ENCODE measurements at regions of chr5 and their contacts with region 1.

Region 1: DNA sequence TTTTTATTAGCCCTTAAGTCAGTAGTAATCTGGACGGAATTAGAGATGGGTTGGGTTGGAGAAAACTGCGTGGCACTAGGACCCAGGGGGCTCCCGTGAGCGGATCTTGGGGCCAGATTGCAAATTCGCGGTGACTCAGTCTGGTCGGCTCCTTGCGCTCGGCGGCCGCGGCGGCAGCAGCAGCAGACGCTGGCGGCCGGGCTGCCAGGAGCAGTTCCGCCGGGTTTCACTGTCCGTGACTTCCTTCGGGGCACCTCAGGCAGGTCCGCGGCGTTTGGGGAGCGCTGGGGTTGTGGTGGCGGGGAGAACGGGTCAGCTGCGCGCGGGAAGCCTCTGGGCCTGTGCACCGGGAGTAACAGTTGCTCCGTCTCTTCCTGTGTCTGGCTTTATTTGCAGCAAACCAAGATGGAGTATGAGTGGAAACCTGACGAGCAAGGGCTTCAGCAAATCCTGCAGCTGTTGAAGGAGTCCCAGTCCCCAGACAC is 31.6 kb downstream of the TNPO1 start:
- DNase-seq: peak; percentile 93
- H3K4me3 Mint-ChIP-seq: peak overlapping the region; percentile 98
- H3K27ac Mint-ChIP-seq: peak overlapping the region; percentile 91
- H3K4me1 Mint-ChIP-seq: peaks cover 43% of the 10 kb centered on the region
- H3K27me3 Mint-ChIP-seq: no peaks in the 10 kb centered on the region
- CTCF ChIP-seq: no peak

Region 2: GRCh38 chr5:72307968-72308852 is 539.8 kb before region 1 on chr5:
- CTCF ChIA-PET with region 1: no interaction called
- POLR2A ChIA-PET with region 1: interaction called, 10 read pairs
- intact Hi-C with region 1: no loop called
- DNase-seq: peak; percentile 98
- H3K4me3 Mint-ChIP-seq: peak overlapping the region; percentile 87
- H3K27ac Mint-ChIP-seq: peak overlapping the region; percentile 95
- H3K4me1 Mint-ChIP-seq: peaks cover 9% of the 10 kb centered on the region
- H3K27me3 Mint-ChIP-seq: no peaks in the 10 kb centered on the region
- CTCF ChIP-seq: peak; percentile 79

Region 3: DNA sequence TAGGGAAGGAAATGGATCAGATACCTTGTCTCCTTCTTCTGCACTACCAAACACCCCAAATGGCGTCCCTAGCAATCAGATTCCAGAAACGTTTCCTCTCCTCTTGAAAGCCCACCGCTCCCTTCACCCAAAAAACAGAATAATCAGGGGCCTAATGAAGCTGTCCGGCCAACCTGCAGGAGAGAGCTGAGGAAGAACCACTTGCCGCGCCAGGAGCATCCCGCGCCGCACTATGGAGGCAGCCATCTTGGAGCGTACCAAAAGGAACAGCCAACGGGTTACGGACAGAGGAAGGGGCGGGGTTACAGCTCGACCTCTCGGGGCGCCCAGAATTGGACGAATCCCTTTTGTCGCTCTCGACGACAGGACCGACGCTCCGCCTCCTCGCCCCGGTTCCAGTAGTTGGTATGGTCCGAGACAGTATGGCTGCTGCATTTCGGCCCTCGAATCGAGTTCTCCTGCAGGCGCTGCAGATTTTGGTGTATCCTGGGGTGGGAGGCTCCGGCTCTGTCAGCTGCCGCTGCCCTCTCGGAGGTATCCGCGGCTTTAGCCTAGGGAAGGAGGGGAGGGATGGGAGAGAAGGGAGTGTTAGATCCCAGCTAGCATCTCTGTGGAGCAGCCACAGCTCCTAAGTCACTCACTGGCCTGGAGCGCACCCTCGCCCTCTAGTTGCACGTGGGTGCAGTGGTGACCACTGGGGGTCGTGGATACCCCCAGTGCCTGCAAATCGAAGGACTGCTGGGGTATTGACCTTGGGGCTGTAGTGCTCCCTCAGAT is 527.9 kb before region 1 on chr5 and contains the starts of genes MRPS27 and PTCD2:
- CTCF ChIA-PET with region 1: no interaction called
- POLR2A ChIA-PET with region 1: interaction called, 11 read pairs
- intact Hi-C with region 1: no loop called
- DNase-seq: peak; percentile 98
- H3K4me3 Mint-ChIP-seq: peak within 1 kb of the TSS; percentile 96
- H3K27ac Mint-ChIP-seq: peak within 1 kb of the TSS; percentile 87
- H3K4me1 Mint-ChIP-seq: peaks cover 19% of the 10 kb centered on the region
- H3K27me3 Mint-ChIP-seq: no peaks in the 10 kb centered on the region
- CTCF ChIP-seq: no peak
- total RNA-seq, gene MRPS27: 60.8 and 68.5 TPM in 2 replicates
- total RNA-seq, gene PTCD2: 20.3 and 20.6 TPM in 2 replicates

Region 4: DNA sequence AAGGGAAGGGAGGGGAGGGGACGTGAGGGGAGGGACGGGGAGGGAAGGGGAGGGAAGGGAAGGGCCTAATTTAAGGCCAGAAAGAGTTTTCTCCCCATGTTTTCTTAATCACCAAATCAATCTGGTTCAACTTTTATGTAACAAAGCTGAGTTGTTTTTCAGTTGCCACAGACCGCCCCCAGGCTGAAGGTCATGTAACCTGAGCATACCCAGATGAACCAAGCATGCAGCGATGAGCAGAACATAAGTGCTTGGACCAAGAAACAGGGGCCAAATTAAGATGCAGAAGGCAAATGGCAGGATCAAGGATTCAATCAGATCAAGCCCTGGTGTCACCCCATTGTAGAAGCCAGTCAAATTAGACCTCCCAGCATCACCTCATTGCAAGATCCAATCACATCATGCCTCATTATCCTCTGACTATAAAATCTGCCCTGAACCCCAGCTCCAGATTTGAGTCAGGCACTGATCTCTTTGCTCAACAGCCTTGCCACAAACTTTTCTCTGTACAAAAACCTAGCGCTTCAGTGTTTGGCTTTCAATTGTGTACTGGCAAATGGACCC is 145.1 kb before region 1 on chr5:
- CTCF ChIA-PET with region 1: no interaction called
- POLR2A ChIA-PET with region 1: no interaction called
- intact Hi-C with region 1: no loop called
- DNase-seq: peak; percentile 12
- H3K4me3 Mint-ChIP-seq: no peak overlapping the region
- H3K27ac Mint-ChIP-seq: no peak overlapping the region
- H3K4me1 Mint-ChIP-seq: no peaks in the 10 kb centered on the region
- H3K27me3 Mint-ChIP-seq: no peaks in the 10 kb centered on the region
- CTCF ChIP-seq: no peak

Region 5: GRCh38 chr5:72837524-72838096 is 10.4 kb before region 1 on chr5:
- CTCF ChIA-PET with region 1: interaction called, 3 read pairs
- POLR2A ChIA-PET with region 1: interaction called, 10 read pairs
- intact Hi-C with region 1: no loop called
- DNase-seq: no peak
- H3K4me3 Mint-ChIP-seq: no peak overlapping the region
- H3K27ac Mint-ChIP-seq: no peak overlapping the region
- H3K4me1 Mint-ChIP-seq: peaks cover 43% of the 10 kb centered on the region
- H3K27me3 Mint-ChIP-seq: no peaks in the 10 kb centered on the region
- CTCF ChIP-seq: no peak

Region 6: DNA sequence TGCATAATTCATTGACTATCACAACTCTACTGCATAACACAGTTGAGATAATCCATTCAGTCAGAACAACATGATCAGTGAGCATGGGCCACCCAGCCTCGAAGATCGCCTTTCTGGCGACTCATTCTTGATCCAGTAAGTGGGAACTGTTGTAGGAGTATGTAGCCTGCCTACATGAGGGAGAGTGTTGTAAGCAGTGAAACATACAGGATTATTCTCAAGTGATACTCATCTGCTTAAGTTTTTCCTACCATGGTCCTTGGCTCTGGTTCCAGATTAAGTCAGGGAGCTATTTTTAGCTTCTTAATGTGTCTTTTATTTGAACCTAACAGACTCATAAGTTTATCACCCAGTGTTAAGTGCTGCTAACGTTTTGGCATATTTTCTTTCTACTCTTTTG is 12.5 kb after region 1 on chr5:
- CTCF ChIA-PET with region 1: interaction called, 7 read pairs
- POLR2A ChIA-PET with region 1: interaction called, 19 read pairs
- intact Hi-C with region 1: no loop called
- DNase-seq: no peak
- H3K4me3 Mint-ChIP-seq: no peak overlapping the region
- H3K27ac Mint-ChIP-seq: no peak overlapping the region
- H3K4me1 Mint-ChIP-seq: peaks cover 5% of the 10 kb centered on the region
- H3K27me3 Mint-ChIP-seq: no peaks in the 10 kb centered on the region
- CTCF ChIP-seq: no peak

Region 7: DNA sequence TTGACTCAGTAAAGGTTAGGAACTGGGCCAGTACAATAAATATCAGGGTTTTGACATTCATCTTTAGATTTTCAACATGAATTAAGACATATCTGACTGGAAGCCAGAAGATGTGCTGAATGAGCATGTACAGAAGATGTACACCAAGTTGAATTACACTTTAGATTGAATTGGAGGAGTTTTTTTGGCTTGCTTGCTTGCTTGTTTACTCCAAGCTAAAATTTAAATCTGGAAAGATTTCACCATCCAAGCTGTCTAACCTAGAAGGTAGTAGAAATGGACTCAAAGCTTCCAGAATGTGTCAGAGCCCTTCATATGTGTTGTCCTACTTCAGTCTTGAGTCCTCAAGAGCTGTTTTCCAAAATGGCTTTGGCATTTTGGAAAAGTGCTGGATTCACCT is 58.8 kb after region 1 on chr5:
- CTCF ChIA-PET with region 1: no interaction called
- POLR2A ChIA-PET with region 1: no interaction called
- intact Hi-C with region 1: no loop called
- DNase-seq: no peak
- H3K4me3 Mint-ChIP-seq: no peak overlapping the region
- H3K27ac Mint-ChIP-seq: no peak overlapping the region
- H3K4me1 Mint-ChIP-seq: no peaks in the 10 kb centered on the region
- H3K27me3 Mint-ChIP-seq: no peaks in the 10 kb centered on the region
- CTCF ChIP-seq: no peak

Measured in MCF 10A (cell line).